Cardiac septum (tissue), 1 donor: ENCODE measurements at regions of chr7 and their contacts with region 1.

Region 1: GRCh38 chr7:75534727-75535307 is 42.7 kb downstream of the SPDYE5 start:
- DNase-seq: no peak

Region 2: GRCh38 chr7:75624134-75624832 is 89.5 kb after region 1 on chr7:
- intact Hi-C with region 1: loop called (anchors 10 kb)
- DNase-seq: peak; percentile 90

Region 3: GRCh38 chr7:75642810-75643486 is 108.1 kb after region 1 on chr7:
- intact Hi-C with region 1: no loop called
- DNase-seq: no peak

Region 4: DNA sequence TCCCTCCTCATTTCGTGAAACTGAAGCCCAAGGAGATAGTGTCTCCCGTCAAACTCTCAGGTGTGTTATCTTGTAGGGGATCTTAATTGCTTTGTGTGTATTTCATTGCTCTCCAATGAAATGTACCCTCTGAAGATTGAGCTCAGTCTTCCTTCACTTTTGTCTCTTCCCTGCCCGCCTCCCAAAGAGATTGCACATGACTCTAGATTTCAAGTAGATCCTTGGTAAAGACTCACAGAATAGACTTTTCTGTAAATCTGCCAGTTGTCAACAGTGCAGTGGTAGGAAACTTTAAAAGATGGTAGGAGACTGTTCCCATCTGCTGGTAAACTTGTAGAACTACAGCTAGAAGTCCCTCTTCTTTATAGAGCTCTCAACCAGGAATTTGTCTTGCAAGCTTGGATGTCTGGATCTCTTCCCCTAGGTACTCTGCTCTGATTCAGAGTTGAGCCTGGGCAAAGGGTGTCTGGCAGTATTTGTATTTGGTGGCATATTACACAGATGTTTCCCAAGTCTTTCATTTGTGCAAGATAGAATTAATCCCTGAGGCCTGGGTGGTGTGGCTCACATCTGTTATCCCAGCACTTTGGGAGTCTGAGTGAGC is 227.6 kb after region 1 on chr7:
- intact Hi-C with region 1: loop called (anchors 5 kb)
- DNase-seq: no peak